A549 (cell line): ENCODE measurements at regions of chr17 and their contacts with region 1.

Region 1: GRCh38 chr17:49567871-49568694 is 7.6 kb upstream of the NXPH3 start:
- DNase-seq: peak; percentile 78 to 92
- ATAC-seq: peak; percentile 63 to 84
- H3K4me3 ChIP-seq: peak overlapping the region; percentile 48
- H3K27ac ChIP-seq: peak overlapping the region; percentile 61 to 82; a peak in 5 of 6 replicates
- H3K4me1 ChIP-seq: no peaks in the 10 kb centered on the region; the same call in 2 of the 3 replicates
- CTCF ChIP-seq: peak; percentile 97
- EP300 ChIP-seq: no peak
- POLR2A ChIP-seq: no peak
- RAD21 ChIP-seq: peak; percentile 99

Region 2: DNA sequence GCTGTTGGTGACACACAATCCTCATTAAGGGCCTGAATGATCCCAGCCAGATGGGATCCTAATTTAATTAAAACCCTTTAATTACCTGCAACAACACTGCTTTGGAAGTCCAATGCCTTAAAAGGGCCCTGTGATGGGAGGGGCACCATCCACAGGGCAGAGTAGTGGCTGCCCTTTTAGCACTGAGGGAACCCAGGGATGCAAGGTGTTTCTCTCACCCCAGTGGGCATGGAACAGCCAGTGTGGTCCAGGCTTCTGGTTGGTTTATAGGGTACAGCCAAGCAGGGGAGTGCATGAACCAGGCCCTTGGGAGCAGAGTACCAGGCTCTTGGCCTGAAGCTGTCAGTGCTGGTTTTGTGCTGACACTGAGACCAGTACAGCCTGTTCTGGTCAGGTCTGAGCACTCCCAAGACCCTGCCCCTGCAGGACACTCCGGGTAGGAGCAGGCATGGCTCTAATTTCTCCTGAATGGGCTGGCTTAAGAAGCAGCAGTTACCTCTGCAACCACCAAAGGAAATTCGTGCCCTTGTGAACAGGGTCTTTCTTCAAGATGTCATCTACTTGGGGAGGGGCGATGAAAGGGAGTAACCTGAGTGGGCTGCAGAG is 17.4 kb after region 1 on chr17:
- CTCF ChIA-PET with region 1: interaction called, 95 read pairs
- POLR2A ChIA-PET with region 1: no interaction called
- DNase-seq: peak; percentile 59 to 72
- ATAC-seq: peak; percentile 81 to 91
- H3K4me3 ChIP-seq: no peak overlapping the region
- H3K27ac ChIP-seq: no peak overlapping the region
- H3K4me1 ChIP-seq: no peaks in the 10 kb centered on the region
- CTCF ChIP-seq: no peak
- EP300 ChIP-seq: no peak
- POLR2A ChIP-seq: no peak
- RAD21 ChIP-seq: no peak

Region 3: DNA sequence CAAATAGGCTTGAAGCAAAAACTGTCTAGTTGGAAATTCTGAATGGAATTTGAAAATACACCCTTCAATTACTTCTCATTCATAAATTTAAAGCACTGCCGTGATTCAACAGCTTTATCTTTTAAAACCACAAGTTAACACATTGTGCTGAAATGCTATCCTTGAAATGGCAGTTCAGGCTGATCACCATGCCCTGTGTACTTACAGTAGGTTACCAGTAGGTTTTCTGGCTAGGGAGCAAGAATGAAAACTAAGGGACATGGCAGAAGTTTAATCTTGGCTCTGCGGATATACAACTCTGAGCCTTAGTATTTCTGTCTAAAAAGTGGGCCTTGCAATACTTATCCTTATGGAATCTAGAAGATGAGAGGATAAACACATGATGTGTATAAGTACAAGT is 35.6 kb after region 1 on chr17:
- CTCF ChIA-PET with region 1: interaction called, 19 read pairs
- POLR2A ChIA-PET with region 1: no interaction called
- DNase-seq: no peak
- ATAC-seq: peak; percentile 64 to 78
- H3K4me3 ChIP-seq: no peak overlapping the region
- H3K27ac ChIP-seq: no peak overlapping the region
- H3K4me1 ChIP-seq: no peaks in the 10 kb centered on the region
- CTCF ChIP-seq: no peak
- EP300 ChIP-seq: no peak
- POLR2A ChIP-seq: no peak
- RAD21 ChIP-seq: no peak

Region 4: DNA sequence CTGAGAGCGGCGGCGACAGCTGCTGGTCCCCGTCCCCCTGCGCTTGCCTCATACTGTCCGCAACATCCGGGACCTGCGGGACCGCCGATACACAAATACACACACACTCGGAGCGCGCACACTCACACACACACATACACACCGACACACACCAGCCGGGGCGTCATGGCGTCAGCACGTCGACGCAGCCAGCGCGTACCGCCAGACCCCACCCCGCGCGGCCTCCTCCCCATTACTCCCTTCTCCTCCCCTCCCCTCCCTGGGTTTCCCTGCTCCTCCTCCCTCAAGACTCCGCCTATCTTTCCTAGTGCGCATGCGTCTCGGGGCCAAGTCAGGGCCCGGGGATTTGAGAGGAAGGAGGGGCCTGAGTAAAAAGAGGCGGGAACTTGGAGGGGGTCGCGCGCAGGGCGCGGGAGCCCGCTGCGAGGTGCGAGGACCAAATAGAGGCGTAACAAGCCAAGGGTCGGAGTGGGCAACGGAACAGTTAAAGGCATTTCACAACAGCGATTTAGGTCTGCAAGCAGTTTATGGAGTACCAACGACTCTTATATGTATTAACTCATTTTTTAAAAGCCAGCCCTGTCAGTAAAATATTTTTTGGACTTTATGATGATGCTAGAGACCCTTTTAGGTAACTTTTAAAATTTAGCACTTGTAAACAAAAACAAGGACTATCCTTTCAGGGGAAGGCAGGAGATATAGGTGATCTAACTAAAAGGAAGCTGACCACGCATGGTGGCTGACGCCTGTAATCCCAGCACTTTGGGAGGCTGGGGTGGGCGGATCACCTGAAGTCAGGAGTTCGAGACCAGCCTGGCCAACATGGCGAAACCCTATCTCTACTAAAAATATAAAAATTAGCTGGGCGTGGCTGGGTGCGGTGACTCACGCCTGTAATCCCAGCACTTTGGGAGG is 110.1 kb after region 1 on chr17 and contains the start of gene SPOP:
- CTCF ChIA-PET with region 1: interaction called, 2,008 read pairs
- POLR2A ChIA-PET with region 1: interaction called, 10 read pairs
- DNase-seq: peak; percentile 97 to 100
- ATAC-seq: peak; percentile 93 to 94
- H3K4me3 ChIP-seq: peak within 1 kb of the TSS; percentile 73
- H3K27ac ChIP-seq: peak within 1 kb of the TSS; percentile 93 to 96
- H3K4me1 ChIP-seq: peaks cover 19% of the 10 kb centered on the region
- CTCF ChIP-seq: no peak
- EP300 ChIP-seq: 0 out of 5 replicates have a peak, but pooled peaks of 1 of the 2 experiments have one; percentile 50
- POLR2A ChIP-seq: peak; percentile 50
- RAD21 ChIP-seq: no peak; a peak in 1 of 5 replicates
- polyA plus RNA-seq, gene SPOP: 57.2 and 61.3 TPM in 2 replicates

Region 5: DNA sequence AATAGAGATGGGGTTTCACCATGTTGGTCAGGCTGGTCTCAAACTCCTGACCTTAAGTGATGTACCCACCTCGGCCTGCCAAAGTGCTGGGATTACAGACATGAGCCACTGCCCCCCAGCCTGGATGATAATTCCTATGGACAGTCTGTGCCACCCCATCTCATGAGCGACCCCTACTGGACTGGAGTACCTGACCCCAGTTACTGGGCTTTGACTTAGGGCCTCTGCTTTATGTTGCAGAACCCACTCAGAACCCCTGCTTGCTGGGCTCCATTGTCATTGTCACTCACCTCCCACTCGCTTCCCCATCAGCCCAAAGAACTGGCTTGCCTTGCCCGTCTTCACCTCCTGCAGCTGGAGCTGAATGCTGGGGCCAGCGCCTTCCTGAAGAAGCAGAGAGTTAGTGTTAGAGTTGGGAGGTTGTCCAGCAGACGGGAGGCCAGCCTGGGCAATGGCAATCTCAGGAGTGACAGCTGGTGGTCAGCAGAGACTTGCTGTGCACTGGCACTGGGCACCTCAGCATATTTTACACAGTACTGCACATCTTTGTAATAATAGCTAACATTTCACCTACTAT is 275.8 kb after region 1 on chr17:
- CTCF ChIA-PET with region 1: interaction called, 12 read pairs
- POLR2A ChIA-PET with region 1: no interaction called
- DNase-seq: peak; percentile 52 to 69
- ATAC-seq: peak in 1 of 2 experiments; percentile 74; a peak in 3 of 6 replicates
- H3K4me3 ChIP-seq: no peak overlapping the region
- H3K27ac ChIP-seq: no peak overlapping the region
- H3K4me1 ChIP-seq: peaks cover 7% of the 10 kb centered on the region; the same call in 1 of the 3 replicates
- CTCF ChIP-seq: peak; percentile 46
- EP300 ChIP-seq: no peak
- POLR2A ChIP-seq: no peak
- RAD21 ChIP-seq: peak; percentile 35 to 52; a peak in 3 of 5 replicates